IMR-90 (cell line): ENCODE measurements at regions of chr11 and their contacts with region 1.

Region 1: GRCh38 chr11:57318178-57318577 is 6.6 kb downstream of the TNKS1BP1 start:
- DNase-seq: peak; percentile 21
- ATAC-seq: no peak
- H3K4me3 ChIP-seq: no peak overlapping the region
- H3K27ac ChIP-seq: peak overlapping the region; percentile 14; the same call in 1 of the 2 replicates
- H3K4me1 ChIP-seq: peaks cover 30% of the 10 kb centered on the region
- H3K27me3 ChIP-seq: no peaks in the 10 kb centered on the region
- CTCF ChIP-seq: no peak
- POLR2A ChIP-seq: no peak
- RAD21 ChIP-seq: no peak

Region 2: GRCh38 chr11:57255618-57256017 is 62.6 kb before region 1 on chr11:
- CTCF ChIA-PET with region 1: no interaction called
- POLR2A ChIA-PET with region 1: no interaction called
- dilution Hi-C with region 1: no loop called
- in situ Hi-C with region 1: no loop called
- intact Hi-C with region 1: loop called (anchors 1 kb)
- DNase-seq: peak; percentile 76
- ATAC-seq: peak; percentile 92
- H3K4me3 ChIP-seq: no peak overlapping the region
- H3K27ac ChIP-seq: no peak overlapping the region
- H3K4me1 ChIP-seq: peaks cover 2% of the 10 kb centered on the region
- H3K27me3 ChIP-seq: no peaks in the 10 kb centered on the region
- CTCF ChIP-seq: no peak
- POLR2A ChIP-seq: no peak
- RAD21 ChIP-seq: no peak

Region 3: GRCh38 chr11:59142530-59143507 is 1824.6 kb after region 1 on chr11 and contains the start of gene FAM111A:
- CTCF ChIA-PET with region 1: no interaction called
- POLR2A ChIA-PET with region 1: interaction called, 12 read pairs
- dilution Hi-C with region 1: no loop called
- in situ Hi-C with region 1: no loop called
- intact Hi-C with region 1: no loop called
- DNase-seq: peak; percentile 86
- ATAC-seq: peak; percentile 90
- H3K4me3 ChIP-seq: peak within 1 kb of the TSS; percentile 82
- H3K27ac ChIP-seq: peak within 1 kb of the TSS; percentile 82
- H3K4me1 ChIP-seq: peaks cover 6% of the 10 kb centered on the region
- H3K27me3 ChIP-seq: no peaks in the 10 kb centered on the region
- CTCF ChIP-seq: peak; percentile 38
- POLR2A ChIP-seq: no peak
- RAD21 ChIP-seq: 0 out of 2 replicates have a peak, but pooled peaks have one; percentile 7
- total RNA-seq, gene FAM111A: 36.4 and 46.1 TPM in 2 replicates